Dendritic cell treated with granulocyte-macrophage colony-stimulating factor and Interleukin-4, amounts not matched to agents 40 ng/mL and 50 ng/mL, for 4 days (primary cell): ENCODE measurements at regions of chr18 and their contacts with region 1.

Region 1: GRCh38 chr18:46013484-46014189 is 46.5 kb upstream of the EPG5 start:
- H3K4me3 Mint-ChIP-seq: no peak overlapping the region
- H3K27ac Mint-ChIP-seq: peak overlapping the region; percentile 72
- H3K4me1 Mint-ChIP-seq: peaks cover 58% of the 10 kb centered on the region
- H3K27me3 Mint-ChIP-seq: no peaks in the 10 kb centered on the region

Region 2: GRCh38 chr18:45967007-45967706 is 46.5 kb before region 1 on chr18 and contains the start of gene EPG5:
- intact Hi-C with region 1: loop called (anchors 2 kb)
- H3K4me3 Mint-ChIP-seq: peak within 1 kb of the TSS; percentile 96
- H3K27ac Mint-ChIP-seq: peak within 1 kb of the TSS; percentile 88
- H3K4me1 Mint-ChIP-seq: peaks cover 23% of the 10 kb centered on the region
- H3K27me3 Mint-ChIP-seq: no peaks in the 10 kb centered on the region

Region 3: GRCh38 chr18:46042571-46043123 is 29.0 kb after region 1 on chr18:
- intact Hi-C with region 1: loop called (anchors 5 kb)
- H3K4me3 Mint-ChIP-seq: peak overlapping the region; percentile 56
- H3K27ac Mint-ChIP-seq: peak overlapping the region; percentile 68
- H3K4me1 Mint-ChIP-seq: peaks cover 73% of the 10 kb centered on the region
- H3K27me3 Mint-ChIP-seq: peaks cover 1% of the 10 kb centered on the region